ENCODE measurements at regions of chr7 and their contacts with region 1.

Region 1: DNA sequence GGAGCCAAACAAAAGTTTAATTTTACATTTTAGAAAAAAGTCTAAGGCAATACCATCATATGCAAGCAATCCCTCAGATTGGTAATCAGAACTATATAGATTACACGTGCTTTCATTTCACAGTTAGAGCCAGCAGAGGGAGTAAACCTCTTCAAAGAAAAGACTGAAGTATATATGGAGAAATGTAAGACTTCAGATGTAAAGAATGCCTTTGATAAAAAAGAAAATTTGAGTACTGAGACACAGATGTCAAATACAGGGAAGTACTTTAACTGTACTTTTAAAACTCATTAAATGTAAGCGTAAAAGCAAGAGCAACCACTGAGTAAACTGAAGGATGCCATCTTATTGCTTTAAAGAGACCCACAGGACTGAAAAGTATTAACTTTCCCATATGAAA is 101.4 kb upstream of the FAM133B start:
- DNase-seq: peak; percentile 40
- ATAC-seq: peak; percentile 92
- H3K4me3 Mint-ChIP-seq: no peak overlapping the region
- H3K27ac Mint-ChIP-seq: peak overlapping the region; percentile 59
- H3K4me1 Mint-ChIP-seq: peaks cover 56% of the 10 kb centered on the region
- H3K27me3 Mint-ChIP-seq: no peaks in the 10 kb centered on the region
- CTCF ChIP-seq: peak; percentile 66

Region 2: DNA sequence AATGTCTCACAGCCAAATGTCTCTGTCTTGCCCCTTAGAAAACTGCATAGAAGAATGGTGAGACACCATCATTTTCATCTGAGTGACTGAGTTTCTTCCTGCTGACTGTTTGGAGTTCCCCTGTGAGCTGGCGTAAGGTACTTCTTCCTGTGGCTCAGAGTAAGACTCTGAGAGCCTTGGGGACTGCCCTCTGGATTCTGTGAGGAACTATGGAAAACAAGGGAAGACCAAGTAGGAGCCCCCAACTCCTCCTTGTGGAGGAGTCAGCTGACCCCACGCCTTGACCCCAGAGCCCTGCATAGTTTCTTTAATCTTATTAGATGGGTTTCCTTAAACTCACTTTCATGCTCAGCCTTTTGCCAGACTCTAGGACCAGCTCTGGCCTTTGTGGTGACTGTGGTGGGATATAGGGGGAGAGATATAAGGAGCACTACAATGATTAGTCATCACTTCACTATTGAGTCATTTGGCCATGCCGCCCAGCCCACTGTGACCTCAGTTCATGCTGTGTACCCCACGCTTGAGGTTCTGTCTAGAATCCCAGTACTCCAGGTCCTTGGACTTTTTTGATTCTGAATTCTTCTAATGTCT is 49.6 kb before region 1 on chr7:
- CTCF ChIA-PET with region 1: no interaction called
- POLR2A ChIA-PET with region 1: no interaction called
- intact Hi-C with region 1: no loop called
- DNase-seq: peak; percentile 87
- ATAC-seq: peak; percentile 71
- H3K4me3 Mint-ChIP-seq: peak overlapping the region; percentile 9
- H3K27ac Mint-ChIP-seq: peak overlapping the region; percentile 92
- H3K4me1 Mint-ChIP-seq: peaks cover 86% of the 10 kb centered on the region
- H3K27me3 Mint-ChIP-seq: no peaks in the 10 kb centered on the region
- CTCF ChIP-seq: no peak

Region 3: DNA sequence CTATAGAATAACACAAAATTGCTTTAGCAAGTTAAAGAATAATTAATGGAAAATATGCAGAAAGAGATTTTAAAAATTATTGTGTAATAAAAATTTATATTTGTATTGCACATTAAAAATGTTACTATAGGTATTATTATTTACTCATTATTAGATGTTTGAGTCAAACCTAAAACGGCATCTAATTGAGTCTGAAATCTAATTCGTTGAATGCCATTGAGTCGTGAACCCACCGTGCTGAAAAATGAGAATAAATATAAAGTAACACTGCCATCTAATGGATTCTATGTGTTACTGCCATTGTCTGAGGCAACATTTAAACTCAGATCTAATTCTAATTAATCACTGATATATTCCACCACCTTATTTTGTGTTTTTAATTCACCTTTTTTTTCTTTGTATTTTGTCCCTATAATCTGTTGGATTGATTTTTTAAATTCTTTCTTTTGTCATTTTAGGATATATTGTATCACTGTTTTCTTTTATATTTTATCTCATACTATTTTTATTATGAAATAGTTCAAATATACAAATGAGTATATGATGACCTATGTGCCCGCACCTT is 364.0 kb after region 1 on chr7:
- CTCF ChIA-PET with region 1: no interaction called
- POLR2A ChIA-PET with region 1: no interaction called
- intact Hi-C with region 1: loop called (anchors 10 kb)
- DNase-seq: no peak
- ATAC-seq: peak; percentile 85
- H3K4me3 Mint-ChIP-seq: no peak overlapping the region
- H3K27ac Mint-ChIP-seq: no peak overlapping the region
- H3K4me1 Mint-ChIP-seq: peaks cover 5% of the 10 kb centered on the region
- H3K27me3 Mint-ChIP-seq: peaks cover 3% of the 10 kb centered on the region
- CTCF ChIP-seq: peak; percentile 81

Measured in activated CD8-positive, alpha-beta T cell treated with anti-CD3 and anti-CD28 coated beads for 36 hours (primary cell).